ENCODE measurements at regions of chr17 and their contacts with region 1.

Region 1: GRCh38 chr17:31321481-31321880 is at the start of gene EVI2A:
- DNase-seq: peak in 37 of 42 donors; percentile 21 to 85 (median 59)

Region 2: DNA sequence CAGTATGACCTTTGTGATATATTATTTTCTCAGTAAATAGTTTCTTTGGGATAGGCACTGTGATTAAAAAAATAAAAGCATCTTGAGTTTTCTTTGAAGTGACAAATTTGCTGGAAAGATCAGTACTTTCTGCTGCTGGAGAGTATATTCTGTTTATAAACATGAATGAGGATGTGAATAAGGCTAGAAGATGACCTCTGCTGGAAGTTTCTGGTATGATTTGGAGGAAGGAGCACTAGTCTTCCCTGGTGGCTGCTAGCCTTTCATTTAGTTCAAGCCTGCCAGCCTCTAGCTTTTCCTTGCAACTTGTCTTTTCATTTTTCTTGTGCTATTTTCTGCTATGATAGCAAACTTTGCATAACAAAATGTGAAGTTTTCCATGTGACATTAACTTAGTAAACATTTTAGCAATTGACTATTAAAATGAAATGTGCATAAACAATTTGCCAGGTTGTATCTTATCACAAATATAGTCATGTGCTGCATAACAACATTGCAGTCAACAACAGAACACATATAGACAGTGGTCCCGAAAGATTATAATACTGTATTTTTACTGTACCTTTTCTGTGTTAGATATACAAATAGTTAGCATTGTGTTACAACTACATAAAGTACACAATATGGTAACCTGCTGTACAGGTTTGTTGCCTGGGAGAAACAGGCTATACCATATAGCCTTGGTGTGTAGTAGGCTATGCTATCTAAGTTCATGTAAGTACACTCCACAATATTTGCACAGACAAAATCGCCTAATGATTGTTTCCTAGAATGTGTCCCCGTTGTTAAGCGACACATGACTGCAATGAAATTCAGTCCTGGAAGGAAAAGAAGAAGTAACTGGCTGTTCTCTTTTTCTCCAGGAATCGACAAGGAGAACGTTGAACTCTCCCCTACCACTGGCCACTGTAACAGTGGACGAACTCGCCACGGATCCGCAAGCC is 51.9 kb after region 1 on chr17:
- intact Hi-C with region 1: loop called (anchors 5 kb)
- DNase-seq: peak in 13 of 42 donors; percentile 34 to 83 (median 56)